ENCODE measurements at regions of chr1 and their contacts with region 1.

Region 1: GRCh38 chr1:89771991-89772560 is 48.8 kb upstream of the LRRC8D start:
- DNase-seq: no peak
- H3K4me3 ChIP-seq: no peak overlapping the region
- H3K27ac ChIP-seq: no peak overlapping the region
- H3K4me1 ChIP-seq: no peaks in the 10 kb centered on the region
- H3K27me3 ChIP-seq: no peaks in the 10 kb centered on the region
- CTCF ChIP-seq: no peak
- EP300 ChIP-seq: no peak
- POLR2A ChIP-seq: no peak

Region 2: GRCh38 chr1:89503690-89504089 is 268.4 kb before region 1 on chr1:
- intact Hi-C with region 1: loop called in 1 of 4 experiments (anchors 10 kb)
- DNase-seq: no peak
- H3K4me3 ChIP-seq: no peak overlapping the region
- H3K27ac ChIP-seq: no peak overlapping the region
- H3K4me1 ChIP-seq: no peaks in the 10 kb centered on the region
- H3K27me3 ChIP-seq: no peaks in the 10 kb centered on the region
- CTCF ChIP-seq: no peak
- EP300 ChIP-seq: no peak
- POLR2A ChIP-seq: no peak

Region 3: GRCh38 chr1:89894210-89895201 is 122.4 kb after region 1 on chr1:
- intact Hi-C with region 1: no loop called
- DNase-seq: no peak
- H3K4me3 ChIP-seq: no peak overlapping the region
- H3K27ac ChIP-seq: no peak overlapping the region
- H3K4me1 ChIP-seq: no peaks in the 10 kb centered on the region
- H3K27me3 ChIP-seq: no peaks in the 10 kb centered on the region
- CTCF ChIP-seq: no peak
- EP300 ChIP-seq: no peak
- POLR2A ChIP-seq: no peak

Measured in ovary (tissue), 10 donors.